ENCODE measurements at regions of chr7 and their contacts with region 1.

Region 1: GRCh38 chr7:112462236-112462635 is 12.0 kb downstream of the IFRD1 start:
- DNase-seq: no peak
- H3K4me3 ChIP-seq: no peak overlapping the region
- H3K27me3 ChIP-seq: no peaks in the 10 kb centered on the region
- CTCF ChIP-seq: no peak

Region 2: DNA sequence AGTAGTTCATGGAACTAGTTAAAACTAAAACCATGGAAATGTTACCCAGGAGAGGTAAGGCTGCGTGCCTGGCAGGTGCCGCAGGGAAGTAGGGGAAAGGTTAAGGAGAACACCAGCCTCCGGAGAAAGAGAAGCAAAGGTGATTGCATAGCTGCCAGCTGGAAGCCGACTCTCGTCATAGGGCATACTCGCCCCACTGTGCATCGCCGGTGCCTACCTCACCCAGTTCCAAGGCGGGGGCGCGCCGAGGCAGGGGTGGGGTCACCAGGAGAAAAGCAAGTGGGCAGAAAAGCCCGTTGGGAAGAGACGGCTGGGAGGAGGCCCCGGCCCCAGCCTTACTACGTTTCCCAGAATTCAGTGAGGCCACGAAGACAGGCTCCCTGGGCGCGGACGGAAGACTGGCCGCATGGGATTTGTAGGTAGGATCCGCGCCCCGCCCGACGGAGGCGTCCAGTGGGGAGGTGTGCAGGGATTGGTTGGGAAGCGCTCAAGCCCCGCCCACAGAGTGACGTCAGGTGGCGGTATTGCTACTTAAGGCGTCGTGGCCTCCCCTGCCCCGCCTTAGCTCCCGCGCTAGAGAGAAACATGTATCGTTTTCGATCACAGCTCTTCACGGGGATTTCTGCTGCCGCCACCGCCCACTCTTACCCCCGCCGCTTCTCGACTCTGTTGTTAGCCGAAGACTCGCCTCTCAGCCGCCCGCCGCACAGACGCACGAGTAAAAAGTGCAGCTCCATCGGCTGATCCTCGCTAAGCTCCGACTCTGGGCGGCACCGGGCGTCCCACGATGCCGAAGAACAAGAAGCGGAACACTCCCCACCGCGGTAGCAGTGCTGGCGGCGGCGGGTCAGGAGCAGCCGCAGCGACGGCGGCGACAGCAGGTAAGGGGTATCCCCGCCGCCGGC is 12.1 kb before region 1 on chr7 and contains the start of gene IFRD1:
- CTCF ChIA-PET with region 1: interaction called, 5 read pairs
- POLR2A ChIA-PET with region 1: interaction called, 10 read pairs
- DNase-seq: peak; percentile 86
- H3K4me3 ChIP-seq: peak within 1 kb of the TSS; percentile 100
- H3K27me3 ChIP-seq: no peaks in the 10 kb centered on the region
- CTCF ChIP-seq: no peak
- polyA plus RNA-seq, gene IFRD1: 24.2 and 39.6 TPM in 2 replicates